ENCODE measurements at regions of chr15 and their contacts with region 1.

Region 1: DNA sequence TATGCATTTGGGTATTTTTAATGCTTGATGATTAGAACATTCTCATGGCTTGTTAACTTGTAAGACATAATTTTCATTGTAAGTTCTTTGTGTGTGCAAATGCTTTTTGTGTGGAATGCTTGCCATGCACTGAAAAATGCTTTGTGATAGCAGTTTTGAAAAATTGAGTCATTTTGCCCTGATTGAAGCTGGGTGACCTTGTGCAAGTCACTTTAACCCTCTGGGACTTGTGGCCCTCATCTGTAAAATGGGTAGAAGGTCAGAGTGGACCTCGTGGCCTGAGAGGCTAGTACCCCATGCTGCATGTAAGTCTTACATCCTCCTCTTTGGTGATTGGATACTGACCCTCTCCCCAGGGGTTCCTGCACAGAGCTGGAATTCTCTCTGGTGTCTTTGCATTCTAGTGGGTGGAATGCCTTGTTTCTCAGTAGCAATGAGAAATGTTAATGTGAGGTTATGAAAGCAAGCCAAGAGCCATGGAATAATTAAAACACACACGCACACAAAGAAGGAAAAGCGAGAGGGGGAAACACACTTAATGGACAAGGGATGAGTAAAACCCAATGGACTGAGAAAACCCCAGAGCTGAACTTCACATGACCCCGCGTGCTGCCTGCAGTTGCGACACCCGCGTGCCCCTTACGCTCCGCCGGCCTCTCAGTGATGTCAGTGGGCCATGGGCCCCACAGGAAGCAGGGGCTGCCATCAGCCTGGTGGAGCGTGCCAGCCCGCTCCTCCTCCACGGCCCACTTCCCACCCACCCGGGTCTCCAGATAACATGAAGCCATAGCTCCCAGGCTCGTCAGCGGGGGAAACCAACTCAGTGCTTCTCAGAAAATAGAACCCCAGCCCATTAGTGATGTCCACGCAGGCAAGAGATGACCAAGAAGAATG is 44.0 kb downstream of the SMAD3 start:
- DNase-seq: no peak
- H3K4me3 ChIP-seq: no peak overlapping the region
- H3K27ac ChIP-seq: no peak overlapping the region
- H3K4me1 ChIP-seq: peaks cover 44% of the 10 kb centered on the region
- H3K27me3 ChIP-seq: no peaks in the 10 kb centered on the region
- CTCF ChIP-seq: no peak

Region 2: DNA sequence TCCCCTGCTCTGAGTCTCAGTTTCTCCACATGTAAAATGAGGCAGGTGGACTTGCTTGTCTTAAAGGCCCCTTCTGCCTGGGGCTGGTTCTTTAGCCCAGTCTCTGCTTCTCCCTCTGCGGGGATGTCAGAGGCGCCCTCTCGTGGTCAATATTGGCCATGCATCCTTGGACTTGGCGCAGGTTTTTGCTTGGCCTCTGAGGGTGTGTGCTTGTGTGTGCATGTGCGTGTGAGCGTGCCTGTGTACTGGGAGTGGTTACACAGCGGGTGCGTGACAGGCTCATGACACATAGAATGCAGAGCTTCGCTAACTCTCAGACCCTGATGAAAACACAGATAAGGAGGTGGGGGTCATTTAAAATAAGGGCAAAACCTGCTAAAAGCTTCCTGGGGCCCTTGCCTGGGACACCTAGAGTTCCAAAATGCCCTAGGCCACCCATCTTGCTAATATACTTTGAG is 246.5 kb before region 1 on chr15:
- CTCF ChIA-PET with region 1: no interaction called
- dilution Hi-C with region 1: no loop called
- in situ Hi-C with region 1: no loop called
- intact Hi-C with region 1: no loop called
- DNase-seq: peak; percentile 82
- H3K4me3 ChIP-seq: no peak overlapping the region
- H3K27ac ChIP-seq: peak overlapping the region; percentile 8
- H3K4me1 ChIP-seq: peaks cover 12% of the 10 kb centered on the region
- H3K27me3 ChIP-seq: no peaks in the 10 kb centered on the region
- CTCF ChIP-seq: peak; percentile 95 to 97

Region 3: DNA sequence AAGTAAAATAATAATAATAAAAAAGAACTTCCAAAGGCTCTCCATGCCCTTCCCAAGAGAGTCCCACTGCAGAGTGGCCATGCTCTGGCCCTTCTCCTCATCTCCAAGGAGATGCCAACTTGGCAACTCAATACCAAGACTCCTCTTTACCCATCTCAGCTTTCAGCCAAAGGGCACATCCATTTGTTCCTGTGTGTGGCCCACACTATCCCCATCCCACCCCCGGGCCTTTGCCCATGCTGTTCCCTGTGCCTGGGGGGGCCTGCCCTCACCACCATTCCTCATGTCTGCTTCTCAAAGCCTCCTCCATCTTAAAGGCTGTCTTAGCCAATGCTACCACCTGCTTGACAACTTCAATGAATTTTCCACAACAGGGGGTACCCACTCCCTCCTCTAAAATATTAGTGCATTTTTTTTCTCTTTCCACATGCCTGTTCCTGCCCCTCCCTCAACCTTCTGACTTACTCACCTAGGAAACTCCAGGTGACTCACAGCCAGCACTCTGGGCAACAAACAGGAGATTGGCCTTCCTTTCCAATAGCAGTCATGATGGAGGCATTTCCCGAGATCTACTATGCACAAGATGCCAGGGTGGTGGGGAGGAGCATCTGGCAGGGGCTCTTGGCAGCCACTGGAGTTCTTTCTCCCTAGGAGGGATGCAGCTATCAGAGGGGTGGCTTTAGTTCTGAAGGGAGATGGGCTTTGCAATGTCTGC is 153.4 kb before region 1 on chr15:
- CTCF ChIA-PET with region 1: no interaction called
- dilution Hi-C with region 1: no loop called
- in situ Hi-C with region 1: no loop called
- intact Hi-C with region 1: loop called (anchors 1 kb)
- DNase-seq: peak; percentile 94
- H3K4me3 ChIP-seq: no peak overlapping the region
- H3K27ac ChIP-seq: peak overlapping the region; percentile 73
- H3K4me1 ChIP-seq: peaks cover 24% of the 10 kb centered on the region
- H3K27me3 ChIP-seq: no peaks in the 10 kb centered on the region
- CTCF ChIP-seq: no peak

Region 4: GRCh38 chr15:67065444-67066093 is 43.8 kb before region 1 on chr15 and contains the start of gene SMAD3:
- CTCF ChIA-PET with region 1: no interaction called
- dilution Hi-C with region 1: no loop called
- in situ Hi-C with region 1: no loop called
- intact Hi-C with region 1: loop called (anchors 1 kb)
- DNase-seq: peak; percentile 93
- H3K4me3 ChIP-seq: peak within 1 kb of the TSS; percentile 81 to 96 (median 91)
- H3K27ac ChIP-seq: peak within 1 kb of the TSS; percentile 81
- H3K4me1 ChIP-seq: peaks cover 38% of the 10 kb centered on the region
- H3K27me3 ChIP-seq: no peaks in the 10 kb centered on the region
- CTCF ChIP-seq: no peak
- total RNA-seq, gene SMAD3: 8.7 to 41.0 TPM

Region 5: DNA sequence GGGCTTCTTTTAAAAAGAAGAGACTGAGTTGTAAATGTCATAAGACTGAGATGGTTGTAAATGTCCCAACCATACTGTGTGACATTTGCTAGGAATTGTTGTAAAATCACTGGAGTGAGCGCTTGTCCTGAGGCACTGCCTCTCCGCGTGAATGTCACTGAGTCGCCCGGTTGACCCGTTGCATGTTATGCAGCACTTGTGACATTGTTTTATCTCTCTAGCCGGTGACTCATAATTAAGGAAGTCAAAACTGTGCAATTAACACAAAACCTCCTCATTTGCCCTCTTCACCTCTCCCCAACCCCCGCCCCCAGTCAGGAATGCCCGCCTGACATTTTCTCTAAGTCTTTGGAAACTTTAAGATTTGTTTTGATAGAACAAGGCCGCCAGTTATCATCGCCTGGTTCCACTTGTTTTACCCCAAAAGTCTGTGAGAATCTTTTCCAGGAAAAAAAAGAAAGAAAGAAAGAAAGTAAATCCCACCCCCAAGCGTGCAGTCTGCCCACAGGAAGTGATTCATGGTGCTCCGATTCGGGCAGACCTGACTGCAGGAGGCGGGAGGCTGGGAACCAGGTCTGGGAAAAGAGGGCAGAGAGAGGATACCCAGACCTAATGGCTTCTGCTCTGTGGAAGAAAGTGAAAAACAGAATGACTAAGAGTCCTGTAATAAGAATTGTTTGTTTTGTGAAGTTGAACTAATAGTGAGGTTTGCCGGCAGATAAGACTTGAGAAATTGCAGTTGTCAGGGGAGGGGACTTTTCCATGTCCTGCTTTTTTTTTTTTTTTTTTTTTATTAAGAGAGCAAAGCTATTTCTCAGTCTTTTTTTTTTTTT is 40.9 kb after region 1 on chr15:
- CTCF ChIA-PET with region 1: no interaction called
- dilution Hi-C with region 1: no loop called
- in situ Hi-C with region 1: no loop called
- intact Hi-C with region 1: loop called (anchors 1 kb)
- DNase-seq: peak; percentile 97
- H3K4me3 ChIP-seq: peak overlapping the region in 2 of 3 experiments; percentile 0 to 23
- H3K27ac ChIP-seq: peak overlapping the region; percentile 92
- H3K4me1 ChIP-seq: peaks cover 51% of the 10 kb centered on the region
- H3K27me3 ChIP-seq: no peaks in the 10 kb centered on the region
- CTCF ChIP-seq: no peak

Region 6: GRCh38 chr15:67225336-67225735 is 115.9 kb after region 1 on chr15:
- CTCF ChIA-PET with region 1: no interaction called
- dilution Hi-C with region 1: no loop called
- in situ Hi-C with region 1: no loop called
- intact Hi-C with region 1: loop called (anchors 2 kb)
- DNase-seq: peak; percentile 78
- H3K4me3 ChIP-seq: no peak overlapping the region
- H3K27ac ChIP-seq: peak overlapping the region; percentile 95
- H3K4me1 ChIP-seq: peaks cover 33% of the 10 kb centered on the region
- H3K27me3 ChIP-seq: no peaks in the 10 kb centered on the region
- CTCF ChIP-seq: no peak

Measured in mammary epithelial cell (primary cell).